Ovary (tissue), 10 donors: ENCODE measurements at regions of chr15 and their contacts with region 1.

Region 1: DNA sequence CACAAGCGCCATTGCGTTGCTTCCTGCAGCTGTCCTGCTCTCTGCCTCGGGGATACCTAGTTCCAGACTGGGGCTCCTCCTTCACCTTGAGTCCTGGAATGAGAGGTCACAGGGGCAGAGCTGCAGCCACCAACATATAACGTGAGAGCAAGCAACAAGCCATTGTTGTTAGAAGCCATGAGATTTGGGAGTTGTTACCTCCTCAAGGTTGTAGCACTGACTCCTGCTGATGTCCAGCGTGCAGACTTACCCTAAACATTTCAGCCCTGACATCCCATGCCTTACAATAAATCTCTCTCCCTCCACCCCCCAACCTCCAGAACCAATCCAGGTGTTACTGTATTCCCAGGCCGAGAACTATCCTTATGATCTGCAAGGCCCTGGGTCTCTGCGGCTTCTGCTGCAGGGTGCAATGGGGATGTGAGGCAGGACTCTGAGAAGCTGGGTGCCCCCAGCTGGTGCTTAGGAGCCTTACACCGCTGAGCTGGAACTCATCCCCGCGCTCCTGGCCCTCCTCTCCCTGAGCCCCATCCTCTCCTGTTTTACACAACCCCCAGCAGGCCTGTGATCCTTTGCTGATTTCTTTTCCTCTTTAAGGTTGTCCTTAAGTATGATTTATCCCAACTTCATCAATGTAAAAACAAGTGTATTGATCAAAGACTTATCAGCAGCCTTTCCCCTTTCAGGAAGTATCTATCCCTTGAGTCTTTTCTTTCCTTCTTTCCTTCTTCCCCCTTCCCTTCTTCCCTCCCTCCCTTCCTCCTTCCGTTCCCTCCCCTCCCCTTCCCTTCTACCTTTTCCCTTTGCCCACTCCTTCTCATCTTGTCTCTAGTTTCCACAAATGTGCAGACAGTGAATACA is 84.2 kb upstream of the ABHD2 start:
- DNase-seq: no peak
- H3K4me3 ChIP-seq: no peak overlapping the region
- H3K27ac ChIP-seq: no peak overlapping the region
- H3K4me1 ChIP-seq: peaks cover 7% of the 10 kb centered on the region
- H3K27me3 ChIP-seq: no peaks in the 10 kb centered on the region
- CTCF ChIP-seq: no peak
- EP300 ChIP-seq: no peak
- POLR2A ChIP-seq: no peak

Region 2: GRCh38 chr15:88800026-88800425 is 204.1 kb before region 1 on chr15:
- intact Hi-C with region 1: no loop called
- DNase-seq: no peak
- H3K4me3 ChIP-seq: no peak overlapping the region
- H3K27ac ChIP-seq: no peak overlapping the region
- H3K4me1 ChIP-seq: no peaks in the 10 kb centered on the region
- H3K27me3 ChIP-seq: no peaks in the 10 kb centered on the region
- CTCF ChIP-seq: no peak
- EP300 ChIP-seq: no peak
- POLR2A ChIP-seq: no peak

Region 3: DNA sequence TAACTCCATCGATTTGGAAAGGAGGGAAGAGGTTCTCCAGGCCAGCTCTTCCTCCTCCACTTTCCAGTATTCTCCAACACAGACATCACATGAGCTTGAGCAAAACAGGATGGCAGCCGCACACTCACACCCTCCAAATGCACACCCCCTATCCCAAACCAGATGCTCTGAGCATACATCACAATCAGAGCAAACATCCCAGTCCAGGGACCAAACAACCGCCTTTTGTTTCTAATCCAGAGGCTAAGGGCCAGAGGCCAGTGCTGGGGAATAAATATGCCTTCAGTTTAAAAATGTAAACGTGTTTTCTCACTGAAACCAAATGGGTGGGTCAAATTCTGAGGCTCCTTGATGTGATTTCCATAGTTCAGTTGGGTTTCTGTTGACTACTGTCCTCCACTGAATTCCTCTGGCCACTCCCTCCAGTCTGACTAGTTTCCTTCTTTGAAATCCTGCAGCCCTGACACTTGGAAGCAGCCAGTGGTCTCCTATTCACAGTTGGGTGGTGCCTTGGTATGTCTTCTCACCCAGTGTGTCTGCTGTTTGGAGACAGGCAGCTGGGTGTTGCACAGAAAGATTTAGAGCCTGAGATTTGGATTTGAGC is 71.7 kb before region 1 on chr15:
- intact Hi-C with region 1: no loop called
- DNase-seq: no peak
- H3K4me3 ChIP-seq: no peak overlapping the region
- H3K27ac ChIP-seq: no peak overlapping the region
- H3K4me1 ChIP-seq: no peaks in the 10 kb centered on the region
- H3K27me3 ChIP-seq: no peaks in the 10 kb centered on the region
- CTCF ChIP-seq: no peak
- EP300 ChIP-seq: no peak
- POLR2A ChIP-seq: no peak

Region 4: DNA sequence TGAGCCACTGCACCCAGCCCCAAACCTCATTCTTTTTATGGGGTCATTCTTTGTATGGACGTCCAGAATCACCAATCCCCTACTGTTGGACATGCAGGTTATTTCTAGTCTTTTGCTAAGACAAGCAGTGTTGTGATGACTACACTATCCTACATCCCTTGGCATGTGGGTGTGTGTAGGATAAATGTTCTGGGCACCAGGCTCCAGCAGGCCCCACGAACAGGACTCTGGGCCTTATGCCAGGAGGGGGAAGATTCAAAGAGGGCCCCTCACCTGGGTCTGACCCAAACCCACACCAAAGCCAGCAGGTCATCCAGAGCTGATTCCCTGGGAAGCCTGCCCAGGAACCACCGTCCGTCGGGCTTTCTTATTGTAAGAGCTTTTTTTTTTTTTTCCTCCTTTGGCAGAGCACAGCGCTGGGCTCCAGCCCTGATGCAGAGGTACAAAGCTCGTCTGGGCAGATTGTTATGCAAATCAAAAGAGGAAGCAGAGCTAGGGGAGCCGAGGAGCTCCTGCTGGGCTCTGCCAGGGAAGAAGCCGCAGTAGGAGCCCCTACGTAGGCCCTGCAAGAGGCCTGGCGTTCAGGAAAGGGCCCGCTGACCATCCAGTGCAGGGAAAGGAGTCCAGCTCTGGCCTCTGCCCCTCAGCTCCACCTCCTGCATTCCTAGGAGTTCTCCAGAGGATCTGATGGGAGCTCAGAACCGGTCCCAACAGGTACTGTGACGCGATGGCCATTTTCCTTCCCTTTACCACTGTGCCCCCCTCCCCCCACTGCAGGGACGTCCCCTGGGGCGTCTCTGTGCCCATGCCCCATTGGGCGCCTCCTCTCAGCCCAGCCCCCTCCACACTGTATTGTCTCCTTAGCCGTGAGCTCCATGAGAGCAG is 1835.3 kb after region 1 on chr15:
- intact Hi-C with region 1: loop called in 1 of 4 experiments (anchors 5 kb)
- DNase-seq: no peak
- H3K4me3 ChIP-seq: no peak overlapping the region
- H3K27ac ChIP-seq: no peak overlapping the region
- H3K4me1 ChIP-seq: no peaks in the 10 kb centered on the region
- H3K27me3 ChIP-seq: no peaks in the 10 kb centered on the region
- CTCF ChIP-seq: no peak
- EP300 ChIP-seq: no peak
- POLR2A ChIP-seq: no peak